ENCODE measurements at regions of chr7 and their contacts with region 1.

Region 1: DNA sequence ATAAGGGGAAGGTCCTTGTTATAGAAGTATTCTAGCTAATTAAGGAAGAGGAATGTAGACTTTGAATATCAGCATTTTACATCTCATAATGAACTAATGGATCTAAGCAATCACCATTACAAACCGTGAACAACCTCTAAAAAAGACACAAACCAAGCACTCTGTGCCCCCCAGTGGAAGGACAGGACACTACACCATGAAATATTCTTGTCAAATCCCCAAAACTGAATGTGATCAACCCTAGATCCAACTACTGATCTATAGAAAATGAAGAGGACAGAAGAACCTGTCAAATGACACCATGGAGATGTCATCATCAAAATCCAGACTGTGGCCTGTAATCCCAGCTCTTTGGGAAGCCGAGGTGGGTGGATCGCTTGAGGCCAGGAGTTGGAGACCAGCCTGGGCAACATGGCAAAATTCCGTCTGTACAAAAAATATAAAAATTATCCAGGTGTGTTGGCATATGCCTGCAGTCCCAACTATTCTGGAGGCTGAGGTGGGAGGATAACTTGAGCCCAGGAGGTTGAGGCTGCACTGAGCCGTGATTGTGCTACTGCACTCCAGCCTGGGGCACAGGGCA is 111.3 kb upstream of the CARD11 start:
- DNase-seq: peak; percentile 73
- H3K4me3 ChIP-seq: no peak overlapping the region
- H3K27ac ChIP-seq: no peak overlapping the region
- H3K4me1 ChIP-seq: no peaks in the 10 kb centered on the region
- H3K27me3 ChIP-seq: no peaks in the 10 kb centered on the region
- CTCF ChIP-seq: peak; percentile 76
- EP300 ChIP-seq: no peak
- RAD21 ChIP-seq: peak; percentile 94

Region 2: DNA sequence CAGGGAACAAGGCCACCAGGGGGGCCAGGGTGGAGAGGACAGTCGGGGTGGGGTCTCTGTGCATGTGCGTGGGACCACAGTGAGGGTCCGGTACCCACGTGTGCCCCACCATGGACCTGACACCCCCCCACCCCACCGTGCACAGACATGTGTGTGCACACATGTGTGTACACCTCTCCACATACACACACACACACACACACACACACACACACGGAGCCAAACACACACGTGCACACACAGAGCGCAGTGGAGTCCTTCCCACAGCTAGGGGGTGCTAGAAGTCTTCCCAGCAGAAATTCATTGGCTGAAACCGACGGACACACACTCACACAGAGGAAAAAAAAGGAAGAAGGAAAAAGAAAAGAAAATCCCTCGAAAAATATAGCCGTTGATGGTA is 268.1 kb before region 1 on chr7:
- CTCF ChIA-PET with region 1: interaction called, 54 read pairs
- POLR2A ChIA-PET with region 1: no interaction called
- DNase-seq: peak; percentile 91
- H3K4me3 ChIP-seq: peak overlapping the region in 1 of 2 experiments; percentile 33; a peak in 1 of 4 replicates
- H3K27ac ChIP-seq: no peak overlapping the region
- H3K4me1 ChIP-seq: peaks cover 0 to 2% of the 10 kb centered on the region in 2 experiments; a peak in 1 of 4 replicates
- H3K27me3 ChIP-seq: no peaks in the 10 kb centered on the region
- CTCF ChIP-seq: peak; percentile 92
- EP300 ChIP-seq: no peak
- RAD21 ChIP-seq: peak; percentile 99

Region 3: DNA sequence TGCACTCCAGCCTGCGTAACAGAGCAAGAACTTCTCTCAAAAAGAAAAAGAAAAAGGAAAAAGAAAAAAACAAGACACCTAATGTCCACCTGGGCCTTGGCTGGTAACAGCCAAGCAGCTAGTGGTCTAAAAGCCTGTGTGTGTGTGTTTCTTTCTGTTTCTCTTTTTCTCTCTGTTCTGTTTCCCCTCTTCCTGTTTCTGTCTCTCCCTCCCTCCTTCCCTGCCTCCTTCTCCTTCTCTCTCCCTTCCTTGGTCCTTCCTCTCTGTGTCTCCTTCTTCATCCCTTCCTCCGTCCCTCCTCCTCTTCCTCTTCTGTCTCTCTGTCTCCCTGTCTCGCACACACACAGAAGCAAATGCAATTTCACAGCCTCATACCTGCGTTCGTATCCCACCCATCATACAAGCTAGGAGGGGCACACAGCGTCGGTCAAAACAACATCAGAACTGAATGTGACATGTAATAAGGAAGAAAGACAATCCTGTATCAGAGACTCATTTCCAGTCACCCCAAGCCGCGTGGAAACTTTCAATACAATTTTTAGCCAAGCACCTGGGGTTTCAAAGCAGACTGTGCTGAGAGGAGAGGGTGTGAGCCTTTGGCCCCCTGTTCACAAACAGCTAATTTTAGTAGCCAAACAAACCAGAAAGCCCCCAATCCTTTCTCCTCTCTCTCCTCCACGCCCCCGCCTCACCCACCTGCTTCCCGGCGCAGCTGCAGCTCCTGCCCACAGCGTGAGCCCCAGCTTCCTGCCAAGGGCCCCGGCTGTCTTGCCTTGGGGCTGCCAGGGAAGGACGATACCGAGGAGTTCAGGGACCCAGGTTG is 260.7 kb before region 1 on chr7:
- CTCF ChIA-PET with region 1: interaction called, 54 read pairs
- POLR2A ChIA-PET with region 1: no interaction called
- DNase-seq: no peak
- H3K4me3 ChIP-seq: no peak overlapping the region
- H3K27ac ChIP-seq: no peak overlapping the region
- H3K4me1 ChIP-seq: no peaks in the 10 kb centered on the region; a peak in 1 of 4 replicates
- H3K27me3 ChIP-seq: no peaks in the 10 kb centered on the region
- CTCF ChIP-seq: no peak
- EP300 ChIP-seq: no peak
- RAD21 ChIP-seq: no peak

Region 4: GRCh38 chr7:2903682-2904162 is 251.3 kb before region 1 on chr7:
- CTCF ChIA-PET with region 1: interaction called, 10 read pairs
- POLR2A ChIA-PET with region 1: no interaction called
- DNase-seq: no peak
- H3K4me3 ChIP-seq: no peak overlapping the region
- H3K27ac ChIP-seq: no peak overlapping the region
- H3K4me1 ChIP-seq: no peaks in the 10 kb centered on the region
- H3K27me3 ChIP-seq: no peaks in the 10 kb centered on the region
- CTCF ChIP-seq: no peak
- EP300 ChIP-seq: no peak
- RAD21 ChIP-seq: no peak

Region 5: GRCh38 chr7:2921653-2922347 is 233.2 kb before region 1 on chr7:
- CTCF ChIA-PET with region 1: interaction called, 13 read pairs
- POLR2A ChIA-PET with region 1: no interaction called
- DNase-seq: peak; percentile 82
- H3K4me3 ChIP-seq: peak overlapping the region in 1 of 2 experiments; percentile 33; a peak in 1 of 4 replicates
- H3K27ac ChIP-seq: 0 out of 4 replicates have a peak overlapping the region, but pooled peaks of 1 of the 2 experiments have one; percentile 7
- H3K4me1 ChIP-seq: peaks cover 0 to 13% of the 10 kb centered on the region in 2 experiments; a peak in 1 of 4 replicates
- H3K27me3 ChIP-seq: peaks cover 9% of the 10 kb centered on the region; the same call in 1 of the 2 replicates
- CTCF ChIP-seq: peak; percentile 56
- EP300 ChIP-seq: no peak
- RAD21 ChIP-seq: peak; percentile 30; the same call in 1 of the 2 replicates

Region 6: GRCh38 chr7:3028071-3028757 is 126.8 kb before region 1 on chr7:
- CTCF ChIA-PET with region 1: interaction called, 11 read pairs
- POLR2A ChIA-PET with region 1: no interaction called
- DNase-seq: peak; percentile 58
- H3K4me3 ChIP-seq: no peak overlapping the region; a peak in 1 of 4 replicates
- H3K27ac ChIP-seq: peak overlapping the region in 1 of 2 experiments; percentile 99; a peak in 2 of 4 replicates
- H3K4me1 ChIP-seq: peaks cover 0 to 26% of the 10 kb centered on the region in 2 experiments; a peak in 2 of 4 replicates
- H3K27me3 ChIP-seq: no peaks in the 10 kb centered on the region
- CTCF ChIP-seq: no peak
- EP300 ChIP-seq: peak in 1 of 2 experiments; percentile 48; a peak in 1 of 4 replicates
- RAD21 ChIP-seq: peak; percentile 16; the same call in 1 of the 2 replicates